ENCODE measurements at regions of chr4 and their contacts with region 1.

Region 1: DNA sequence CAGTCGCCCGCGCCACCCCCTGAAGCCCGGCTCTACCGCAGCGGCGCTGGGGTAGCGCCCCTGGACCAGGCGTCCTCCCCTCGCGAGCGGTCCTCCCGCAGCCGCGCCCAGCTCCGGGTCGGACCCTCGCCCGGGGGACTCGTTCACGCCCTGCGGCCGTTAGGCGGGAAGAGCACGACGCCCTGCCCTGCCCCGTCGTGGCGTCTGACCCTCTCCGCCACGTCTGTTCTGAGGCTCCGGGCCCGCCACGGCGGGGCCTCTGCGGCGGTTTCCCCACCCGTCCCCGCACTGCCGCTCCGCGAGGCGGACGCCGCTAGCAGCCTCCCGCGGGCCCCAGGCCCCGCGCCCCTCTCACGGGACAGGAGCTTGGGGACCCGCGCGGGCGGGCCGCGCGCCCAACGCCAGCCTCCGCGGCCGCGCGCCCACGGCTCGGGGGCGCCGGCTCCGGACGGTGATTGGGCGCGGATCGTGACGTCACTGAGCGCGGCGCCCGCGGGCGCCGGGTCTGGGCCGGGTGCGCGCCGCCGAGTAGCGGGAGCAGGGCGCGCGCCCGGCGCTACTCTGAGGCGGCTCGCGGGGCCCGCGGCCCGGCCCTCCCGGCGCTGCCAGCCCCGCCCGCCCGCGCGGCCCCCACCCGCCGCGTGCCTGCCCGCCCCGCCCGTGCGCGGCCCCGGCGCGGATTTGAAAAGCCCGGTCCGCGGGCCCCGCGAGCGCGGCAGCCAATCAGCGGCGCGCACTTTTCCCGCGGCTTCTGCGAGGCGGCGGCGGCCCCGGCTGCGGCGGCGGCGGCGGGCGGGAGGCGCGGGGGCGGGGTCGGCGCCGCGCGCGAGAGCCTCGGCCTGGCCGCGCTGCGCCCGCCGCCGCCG is at the start of gene NSD2:
- DNase-seq: peak; percentile 45
- H3K4me3 ChIP-seq: peak within 1 kb of the TSS; percentile 76
- H3K27ac ChIP-seq: peak within 1 kb of the TSS; percentile 68
- H3K27me3 ChIP-seq: no peaks in the 10 kb centered on the region
- CTCF ChIP-seq: no peak
- polyA plus RNA-seq, gene NSD2: 23.7 and 26.4 TPM in 2 replicates

Region 2: GRCh38 chr4:1693129-1693896 is 177.5 kb before region 1 on chr4:
- CTCF ChIA-PET with region 1: no interaction called
- POLR2A ChIA-PET with region 1: no interaction called
- DNase-seq: peak; percentile 50
- H3K4me3 ChIP-seq: no peak overlapping the region
- H3K27ac ChIP-seq: no peak overlapping the region
- H3K27me3 ChIP-seq: no peaks in the 10 kb centered on the region
- CTCF ChIP-seq: peak; percentile 96

Region 3: DNA sequence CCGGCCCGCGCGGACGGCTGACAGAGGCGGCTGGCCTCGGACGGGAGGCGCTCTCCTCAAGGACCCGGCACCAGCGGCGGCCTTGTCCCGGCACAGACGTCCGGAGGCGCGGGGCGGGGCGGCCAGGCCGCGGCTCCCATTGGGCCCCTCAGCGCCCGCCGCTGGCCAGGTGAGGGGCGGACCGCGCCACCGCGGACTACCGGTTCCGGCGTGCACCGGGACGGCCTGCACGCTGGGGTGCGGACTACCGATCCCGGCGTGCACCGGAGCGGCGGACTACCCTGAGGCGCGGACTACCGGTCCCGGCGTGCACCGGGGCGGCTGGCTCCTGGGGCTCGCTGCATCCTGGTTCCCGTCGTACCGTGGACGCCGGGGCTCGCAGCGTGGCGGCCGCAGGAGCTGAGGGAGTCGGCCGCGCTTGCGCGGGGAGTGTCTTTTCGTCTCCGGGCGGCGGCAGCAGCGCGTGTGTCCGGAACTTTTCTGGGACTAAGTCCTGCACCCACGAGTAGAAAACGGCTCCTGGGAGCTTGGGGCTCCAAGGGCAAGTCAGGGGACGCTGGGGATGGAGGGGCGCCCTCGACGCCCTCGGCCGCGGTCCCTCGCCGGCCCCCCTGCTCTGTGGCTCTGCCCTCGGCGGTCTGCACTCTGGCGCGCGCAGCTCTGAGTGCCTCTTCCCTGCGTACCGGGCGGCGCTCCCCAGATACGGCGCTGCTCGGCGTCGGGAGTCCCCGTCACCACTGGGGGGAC is 14.6 kb before region 1 on chr4 and contains the start of gene LETM1:
- CTCF ChIA-PET with region 1: interaction called, 4 read pairs
- POLR2A ChIA-PET with region 1: interaction called, 14 read pairs
- DNase-seq: peak; percentile 84
- H3K4me3 ChIP-seq: peak within 1 kb of the TSS; percentile 86
- H3K27ac ChIP-seq: peak within 1 kb of the TSS; percentile 57
- H3K27me3 ChIP-seq: no peaks in the 10 kb centered on the region
- CTCF ChIP-seq: no peak
- polyA plus RNA-seq, gene LETM1: 11.9 and 15.2 TPM in 2 replicates

Region 4: GRCh38 chr4:2009704-2010197 is 138.9 kb after region 1 on chr4:
- CTCF ChIA-PET with region 1: no interaction called
- POLR2A ChIA-PET with region 1: no interaction called
- DNase-seq: no peak
- H3K4me3 ChIP-seq: peak overlapping the region; percentile 100
- H3K27ac ChIP-seq: peak overlapping the region; percentile 39
- H3K27me3 ChIP-seq: peaks cover 3% of the 10 kb centered on the region
- CTCF ChIP-seq: peak; percentile 38

Measured in AG04450 (cell line).